SK-N-SH (cell line): ENCODE measurements at regions of chr7 and their contacts with region 1.

Region 1: DNA sequence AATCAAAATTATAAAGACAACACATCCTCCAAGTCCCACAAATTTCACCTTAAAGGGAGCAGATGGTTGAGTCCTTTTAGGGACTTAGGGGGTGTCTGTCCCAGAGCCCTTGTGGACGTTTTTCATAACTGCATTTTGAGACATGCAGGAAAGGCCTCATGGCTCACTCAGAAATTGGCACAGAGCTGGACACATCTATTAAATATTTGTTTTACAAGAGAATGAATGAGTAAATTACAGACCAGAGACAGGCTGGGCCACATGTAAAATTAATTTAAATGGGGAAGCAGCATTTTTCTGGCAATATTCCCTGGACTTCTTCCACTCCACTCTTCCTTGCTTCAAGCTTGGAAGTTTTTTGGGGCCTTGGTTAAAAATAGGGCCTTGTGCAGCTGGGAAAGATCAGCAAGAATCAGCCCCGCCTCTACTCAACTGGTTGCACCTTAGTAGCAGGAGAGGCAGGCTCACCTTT is 20.0 kb downstream of the LAMB1 start:
- DNase-seq: no peak
- H3K4me3 ChIP-seq: no peak overlapping the region
- H3K27ac ChIP-seq: peak overlapping the region; percentile 11 to 64; a peak in 3 of 4 replicates
- H3K4me1 ChIP-seq: peaks cover 0 to 11% of the 10 kb centered on the region in 2 experiments; a peak in 3 of 4 replicates
- H3K27me3 ChIP-seq: no peaks in the 10 kb centered on the region
- CTCF ChIP-seq: peak; percentile 53
- EP300 ChIP-seq: peak in 1 of 2 experiments; percentile 43; a peak in 1 of 4 replicates
- RAD21 ChIP-seq: no peak; the same call in 1 of the 2 replicates

Region 2: GRCh38 chr7:107972075-107972482 is 10.9 kb before region 1 on chr7:
- CTCF ChIA-PET with region 1: interaction called, 18 read pairs
- POLR2A ChIA-PET with region 1: no interaction called
- DNase-seq: peak; percentile 50
- H3K4me3 ChIP-seq: no peak overlapping the region
- H3K27ac ChIP-seq: peak overlapping the region; percentile 56 to 89
- H3K4me1 ChIP-seq: peaks cover 7 to 17% of the 10 kb centered on the region in 2 experiments
- H3K27me3 ChIP-seq: no peaks in the 10 kb centered on the region
- CTCF ChIP-seq: no peak
- EP300 ChIP-seq: peak in 1 of 2 experiments; percentile 87; a peak in 2 of 4 replicates
- RAD21 ChIP-seq: no peak

Region 3: GRCh38 chr7:107995184-107996071 is 12.5 kb after region 1 on chr7:
- CTCF ChIA-PET with region 1: interaction called, 33 read pairs
- POLR2A ChIA-PET with region 1: no interaction called
- DNase-seq: peak; percentile 50
- H3K4me3 ChIP-seq: 0 out of 4 replicates have a peak overlapping the region, but pooled peaks of 1 of the 2 experiments have one; percentile 1
- H3K27ac ChIP-seq: peak overlapping the region; percentile 93
- H3K4me1 ChIP-seq: peaks cover 56 to 65% of the 10 kb centered on the region in 2 experiments
- H3K27me3 ChIP-seq: no peaks in the 10 kb centered on the region
- CTCF ChIP-seq: no peak
- EP300 ChIP-seq: peak; percentile 36 to 67; a peak in 3 of 4 replicates
- RAD21 ChIP-seq: no peak

Region 4: GRCh38 chr7:108002726-108003598 is 20.0 kb after region 1 on chr7 and contains the start of gene LAMB1:
- CTCF ChIA-PET with region 1: interaction called, 33 read pairs
- POLR2A ChIA-PET with region 1: interaction called, 3 read pairs
- DNase-seq: peak; percentile 98
- H3K4me3 ChIP-seq: peak within 1 kb of the TSS; percentile 92 to 95
- H3K27ac ChIP-seq: peak within 1 kb of the TSS; percentile 93 to 100
- H3K4me1 ChIP-seq: peaks cover 43 to 56% of the 10 kb centered on the region in 2 experiments
- H3K27me3 ChIP-seq: no peaks in the 10 kb centered on the region
- CTCF ChIP-seq: no peak
- EP300 ChIP-seq: peak; percentile 27 to 35; a peak in 1 of 4 replicates
- RAD21 ChIP-seq: 0 out of 2 replicates have a peak, but pooled peaks have one; percentile 31
- polyA plus RNA-seq, gene LAMB1: 435 and 471 TPM in 2 replicates